MCF 10A (cell line): ENCODE measurements at regions of chr2 and their contacts with region 1.

Region 1: DNA sequence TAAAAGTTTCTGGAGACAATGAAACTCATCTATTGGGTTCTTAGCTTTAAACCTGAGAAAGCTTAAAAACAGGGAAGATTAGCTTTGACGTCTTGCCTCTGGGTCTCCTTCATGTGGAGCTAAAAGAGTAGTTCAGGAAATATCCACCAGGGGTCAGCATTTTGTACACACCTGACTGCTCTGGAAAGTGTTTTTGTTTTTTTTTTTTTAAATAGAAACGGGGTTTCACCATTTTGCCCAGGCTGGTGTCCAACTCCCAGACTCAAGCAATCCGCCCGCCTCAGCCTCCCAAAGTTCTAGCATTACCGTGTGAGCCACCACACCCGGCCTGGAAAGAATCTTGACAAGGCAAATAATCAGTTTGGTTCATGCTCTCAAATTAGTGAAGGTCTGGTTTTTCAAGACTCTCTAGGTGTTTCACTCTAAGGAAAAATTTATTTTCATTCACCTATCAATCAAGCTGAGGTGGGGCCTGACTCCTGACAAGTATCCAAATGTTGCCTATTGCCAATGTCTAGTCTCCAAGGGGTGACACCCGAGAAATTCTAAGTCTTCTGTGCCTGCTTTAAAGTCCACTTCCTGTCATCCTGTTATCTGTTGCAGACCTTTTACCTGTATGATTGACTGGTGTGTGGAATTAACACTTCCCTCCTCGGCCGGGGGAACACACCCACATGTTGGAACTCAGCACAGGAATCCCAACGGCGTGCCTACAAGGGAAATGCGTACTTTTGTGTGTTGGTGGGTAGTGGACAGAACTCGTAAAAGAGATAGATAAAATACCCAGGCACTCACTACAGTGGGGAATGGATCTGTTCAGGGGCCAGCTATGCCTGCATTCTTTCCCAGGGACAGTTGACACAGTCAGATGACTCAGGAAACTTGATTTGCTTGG is 11.3 kb downstream of the IL1RN start:
- DNase-seq: peak; percentile 85
- H3K4me3 Mint-ChIP-seq: no peak overlapping the region
- H3K27ac Mint-ChIP-seq: no peak overlapping the region
- H3K4me1 Mint-ChIP-seq: peaks cover 6% of the 10 kb centered on the region
- H3K27me3 Mint-ChIP-seq: no peaks in the 10 kb centered on the region
- CTCF ChIP-seq: peak; percentile 74

Region 2: GRCh38 chr2:112958428-112959108 is 180.1 kb before region 1 on chr2:
- CTCF ChIA-PET with region 1: no interaction called
- POLR2A ChIA-PET with region 1: no interaction called
- intact Hi-C with region 1: no loop called
- DNase-seq: peak; percentile 85
- H3K4me3 Mint-ChIP-seq: no peak overlapping the region
- H3K27ac Mint-ChIP-seq: no peak overlapping the region
- H3K4me1 Mint-ChIP-seq: no peaks in the 10 kb centered on the region
- H3K27me3 Mint-ChIP-seq: no peaks in the 10 kb centered on the region
- CTCF ChIP-seq: peak; percentile 69

Region 3: GRCh38 chr2:113102133-113102532 is 36.5 kb before region 1 on chr2:
- CTCF ChIA-PET with region 1: interaction called, 10 read pairs
- POLR2A ChIA-PET with region 1: no interaction called
- intact Hi-C with region 1: no loop called
- DNase-seq: no peak
- H3K4me3 Mint-ChIP-seq: no peak overlapping the region
- H3K27ac Mint-ChIP-seq: no peak overlapping the region
- H3K4me1 Mint-ChIP-seq: peaks cover 5% of the 10 kb centered on the region
- H3K27me3 Mint-ChIP-seq: peaks cover 12% of the 10 kb centered on the region
- CTCF ChIP-seq: no peak

Region 4: DNA sequence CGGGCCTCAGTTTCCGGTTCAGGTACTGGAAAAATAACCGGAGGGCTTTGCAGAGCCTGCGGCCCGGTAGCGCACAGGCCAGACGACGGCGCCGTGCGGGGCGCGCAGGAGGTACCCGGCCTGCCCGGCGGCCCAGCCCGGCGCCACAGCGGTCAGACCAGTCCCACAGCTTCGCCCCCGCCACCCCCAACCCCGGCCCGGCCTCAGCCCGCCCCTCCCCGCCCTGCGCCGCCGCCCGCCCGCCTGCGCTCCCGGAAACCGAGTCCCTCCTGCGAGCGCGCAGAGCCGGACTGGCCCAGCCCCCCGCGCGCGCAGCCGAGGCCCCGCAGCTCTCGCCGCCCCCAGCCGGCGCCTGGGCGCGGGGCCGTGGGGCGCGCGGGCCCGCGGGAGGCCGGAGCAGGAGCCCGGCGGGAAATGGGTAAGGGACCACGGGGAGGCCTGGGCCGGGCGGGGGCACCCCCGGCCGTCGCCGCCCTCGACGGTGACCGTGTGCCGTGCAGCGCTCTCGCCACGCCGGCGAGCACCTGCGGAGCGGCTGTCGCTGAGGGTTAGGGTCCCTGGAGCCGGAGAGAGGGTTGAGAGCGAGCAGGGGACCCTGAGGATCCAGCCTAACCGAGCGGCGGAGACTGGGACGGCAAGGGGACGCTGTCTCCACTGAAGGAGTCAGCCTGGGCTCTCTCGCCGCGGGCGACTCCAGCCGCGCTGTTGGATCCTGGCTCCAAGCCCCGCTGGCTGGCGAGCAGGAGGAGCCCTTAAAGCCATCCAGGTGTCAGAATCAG is 18.6 kb after region 1 on chr2:
- CTCF ChIA-PET with region 1: interaction called, 19 read pairs
- POLR2A ChIA-PET with region 1: interaction called, 3 read pairs
- intact Hi-C with region 1: loop called (anchors 2 kb)
- DNase-seq: peak; percentile 56
- H3K4me3 Mint-ChIP-seq: peak overlapping the region; percentile 72
- H3K27ac Mint-ChIP-seq: peak overlapping the region; percentile 53
- H3K4me1 Mint-ChIP-seq: peaks cover 16% of the 10 kb centered on the region
- H3K27me3 Mint-ChIP-seq: no peaks in the 10 kb centered on the region
- CTCF ChIP-seq: no peak

Region 5: DNA sequence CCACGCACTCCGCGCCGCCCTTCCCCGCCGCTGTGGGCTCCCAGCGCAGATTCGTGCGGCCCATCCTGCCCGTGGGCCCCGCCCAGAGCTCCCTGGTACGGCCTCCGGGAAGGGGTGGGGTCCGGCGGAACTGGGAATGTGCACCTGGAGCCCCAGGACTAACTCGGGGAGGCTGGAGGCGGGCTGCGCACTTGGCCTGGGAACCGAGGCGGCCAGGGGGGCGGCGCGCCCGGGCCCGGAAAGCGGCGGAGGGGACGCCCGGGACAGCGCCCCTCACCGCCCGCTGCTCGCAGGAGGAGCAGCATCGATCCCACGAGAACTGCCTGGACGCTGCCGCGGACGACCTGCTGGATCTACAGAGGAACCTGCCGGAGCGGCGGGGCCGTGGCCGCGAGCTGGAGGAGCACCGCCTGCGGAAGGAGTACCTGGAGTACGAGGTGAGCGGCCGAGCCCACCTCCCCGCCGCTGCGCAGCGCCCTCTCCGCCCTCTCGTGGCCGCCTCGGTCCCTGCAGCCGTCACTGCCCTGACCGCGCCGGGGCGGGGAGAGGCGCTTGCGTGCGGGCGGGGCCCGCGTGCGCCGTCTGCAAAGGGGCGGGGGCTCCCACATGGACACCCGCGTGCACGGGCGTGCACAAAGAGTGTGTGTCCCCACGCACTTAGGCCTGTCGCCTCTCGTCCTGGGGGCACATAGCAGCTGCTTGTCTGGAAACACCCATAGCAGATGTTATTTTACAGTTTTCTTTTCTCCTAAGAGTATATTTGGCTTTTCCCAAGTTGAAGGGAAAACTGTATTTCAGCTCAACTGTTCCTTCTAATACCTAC is 60.3 kb after region 1 on chr2:
- CTCF ChIA-PET with region 1: interaction called, 179 read pairs
- POLR2A ChIA-PET with region 1: interaction called, 29 read pairs
- intact Hi-C with region 1: loop called (anchors 1 kb)
- DNase-seq: peak; percentile 80
- H3K4me3 Mint-ChIP-seq: peak overlapping the region; percentile 76
- H3K27ac Mint-ChIP-seq: peak overlapping the region; percentile 85
- H3K4me1 Mint-ChIP-seq: peaks cover 3% of the 10 kb centered on the region
- H3K27me3 Mint-ChIP-seq: no peaks in the 10 kb centered on the region
- CTCF ChIP-seq: peak; percentile 94

Region 6: GRCh38 chr2:113233593-113234550 is 95.2 kb after region 1 on chr2:
- CTCF ChIA-PET with region 1: interaction called, 11 read pairs
- POLR2A ChIA-PET with region 1: no interaction called
- intact Hi-C with region 1: no loop called
- DNase-seq: peak; percentile 43
- H3K4me3 Mint-ChIP-seq: no peak overlapping the region
- H3K27ac Mint-ChIP-seq: no peak overlapping the region
- H3K4me1 Mint-ChIP-seq: peaks cover 14% of the 10 kb centered on the region
- H3K27me3 Mint-ChIP-seq: no peaks in the 10 kb centered on the region
- CTCF ChIP-seq: no peak

Region 7: GRCh38 chr2:113370478-113371091 is 231.9 kb after region 1 on chr2:
- CTCF ChIA-PET with region 1: interaction called, 23 read pairs
- POLR2A ChIA-PET with region 1: no interaction called
- intact Hi-C with region 1: loop called (anchors 1 kb)
- DNase-seq: peak; percentile 80
- H3K4me3 Mint-ChIP-seq: no peak overlapping the region
- H3K27ac Mint-ChIP-seq: no peak overlapping the region
- H3K4me1 Mint-ChIP-seq: peaks cover 7% of the 10 kb centered on the region
- H3K27me3 Mint-ChIP-seq: no peaks in the 10 kb centered on the region
- CTCF ChIP-seq: peak; percentile 76